CD4-positive, alpha-beta T cell (primary cell): ENCODE measurements at regions of chr4 and their contacts with region 1.

Region 1: GRCh38 chr4:38062088-38062893 is 102.1 kb downstream of the PTTG2 start:
- DNase-seq: peak; percentile 32 to 82 (median 54)
- ATAC-seq: peak; percentile 73
- H3K4me3 ChIP-seq: peak overlapping the region; percentile 44
- H3K4me3 Mint-ChIP-seq: peak overlapping the region; percentile 91
- H3K27ac ChIP-seq: no peak overlapping the region
- H3K27ac Mint-ChIP-seq: no peak overlapping the region
- H3K4me1 ChIP-seq: peaks cover 7% of the 10 kb centered on the region
- H3K4me1 Mint-ChIP-seq: peaks cover 15% of the 10 kb centered on the region
- H3K27me3 ChIP-seq: no peaks in the 10 kb centered on the region
- H3K27me3 Mint-ChIP-seq: no peaks in the 10 kb centered on the region
- CTCF ChIP-seq: peak; percentile 95

Region 2: GRCh38 chr4:38013461-38014366 is 48.6 kb before region 1 on chr4:
- CTCF ChIA-PET with region 1: no interaction called
- POLR2A ChIA-PET with region 1: no interaction called
- intact Hi-C with region 1: no loop called
- DNase-seq: no peak
- ATAC-seq: no peak
- H3K4me3 ChIP-seq: no peak overlapping the region
- H3K4me3 Mint-ChIP-seq: no peak overlapping the region
- H3K27ac ChIP-seq: no peak overlapping the region
- H3K27ac Mint-ChIP-seq: no peak overlapping the region
- H3K4me1 ChIP-seq: no peaks in the 10 kb centered on the region
- H3K4me1 Mint-ChIP-seq: peaks cover under 1% of the 10 kb centered on the region
- H3K27me3 ChIP-seq: no peaks in the 10 kb centered on the region
- H3K27me3 Mint-ChIP-seq: no peaks in the 10 kb centered on the region
- CTCF ChIP-seq: no peak

Region 3: DNA sequence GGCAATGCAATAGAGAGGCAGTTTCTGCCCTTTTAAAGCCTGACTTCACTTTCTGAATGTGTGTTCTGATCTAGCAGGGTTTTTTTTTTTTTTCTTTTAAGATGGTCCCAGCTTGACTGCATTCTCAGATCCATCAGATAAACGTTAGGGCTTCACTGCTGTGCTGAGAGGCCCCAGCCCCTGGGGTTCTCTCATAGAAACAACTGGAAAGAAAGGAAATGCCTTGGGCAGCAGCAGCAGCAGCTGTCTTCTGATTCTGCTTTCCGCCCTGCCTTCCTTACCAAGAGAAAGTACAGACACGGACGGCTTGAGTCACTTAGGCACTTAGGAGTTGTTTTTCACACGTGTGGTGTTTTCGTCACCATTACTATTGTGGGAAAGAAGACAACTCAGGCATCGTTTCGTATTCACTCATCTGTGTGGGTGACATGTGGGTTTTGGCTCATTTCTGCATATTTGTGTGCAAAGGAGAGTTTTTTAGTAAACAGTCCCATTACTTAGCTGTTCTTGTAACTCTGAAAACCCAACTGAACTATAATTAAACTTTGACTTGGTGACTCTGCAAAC is 69.9 kb after region 1 on chr4:
- CTCF ChIA-PET with region 1: no interaction called
- POLR2A ChIA-PET with region 1: no interaction called
- intact Hi-C with region 1: loop called in 1 of 2 experiments (anchors 5 kb)
- DNase-seq: peak; percentile 35 to 90 (median 54)
- ATAC-seq: peak; percentile 75
- H3K4me3 ChIP-seq: peak overlapping the region; percentile 6
- H3K4me3 Mint-ChIP-seq: peak overlapping the region; percentile 85
- H3K27ac ChIP-seq: peak overlapping the region; percentile 37 to 59
- H3K27ac Mint-ChIP-seq: peak overlapping the region; percentile 91
- H3K4me1 ChIP-seq: peaks cover 54% of the 10 kb centered on the region
- H3K4me1 Mint-ChIP-seq: peaks cover 53% of the 10 kb centered on the region
- H3K27me3 ChIP-seq: no peaks in the 10 kb centered on the region
- H3K27me3 Mint-ChIP-seq: no peaks in the 10 kb centered on the region
- CTCF ChIP-seq: no peak

Region 4: GRCh38 chr4:38675146-38676121 is 613.1 kb after region 1 on chr4:
- CTCF ChIA-PET with region 1: no interaction called
- POLR2A ChIA-PET with region 1: no interaction called
- intact Hi-C with region 1: loop called in 1 of 2 experiments (anchors 2 kb)
- DNase-seq: peak; percentile 66 to 93 (median 80)
- ATAC-seq: peak; percentile 57
- H3K4me3 ChIP-seq: no peak overlapping the region
- H3K4me3 Mint-ChIP-seq: peak overlapping the region; percentile 85
- H3K27ac ChIP-seq: peak overlapping the region in 1 of 2 donors; percentile 51
- H3K27ac Mint-ChIP-seq: peak overlapping the region; percentile 81
- H3K4me1 ChIP-seq: peaks cover 72% of the 10 kb centered on the region
- H3K4me1 Mint-ChIP-seq: peaks cover 89% of the 10 kb centered on the region
- H3K27me3 ChIP-seq: no peaks in the 10 kb centered on the region
- H3K27me3 Mint-ChIP-seq: no peaks in the 10 kb centered on the region
- CTCF ChIP-seq: peak; percentile 96

Region 5: DNA sequence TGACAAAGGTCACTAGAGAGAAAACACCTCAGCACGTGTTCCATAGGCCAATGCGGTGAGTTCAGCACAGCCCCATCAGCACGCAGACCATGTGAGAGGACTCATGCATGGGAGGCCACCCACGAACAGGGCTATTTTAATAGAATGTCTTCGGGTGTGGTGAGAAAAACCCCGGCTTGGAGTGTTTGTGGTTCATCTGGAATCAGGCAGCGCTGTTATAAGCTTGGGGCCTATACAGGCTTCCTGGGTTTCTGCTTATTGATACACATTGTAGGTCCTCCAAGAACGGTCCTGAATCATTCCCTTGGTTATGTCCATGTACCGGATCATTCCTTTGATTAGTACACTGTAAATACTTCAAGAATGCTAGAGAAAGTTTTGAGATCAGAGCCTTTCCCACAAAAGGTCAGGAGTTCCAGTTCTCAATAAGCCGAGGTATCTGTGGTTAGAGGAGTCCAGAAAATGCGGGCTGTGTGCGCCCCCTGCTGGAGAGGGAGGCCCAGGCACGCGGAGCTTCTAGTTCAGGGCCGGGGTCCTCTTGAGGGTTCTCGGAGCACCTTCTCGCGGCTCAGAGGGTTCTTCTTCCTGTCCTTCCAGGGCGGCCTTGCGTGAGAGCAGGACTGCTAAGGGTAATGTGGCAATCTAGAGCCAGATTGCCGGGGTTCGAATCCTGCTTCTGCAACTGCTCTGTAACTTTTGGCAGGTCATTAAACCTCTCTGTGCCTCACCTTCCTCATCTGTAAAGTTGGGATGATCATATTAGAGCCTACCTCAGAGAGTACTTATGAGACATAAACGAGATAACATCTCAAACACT is 668.7 kb after region 1 on chr4:
- CTCF ChIA-PET with region 1: interaction called, 5 read pairs
- POLR2A ChIA-PET with region 1: no interaction called
- intact Hi-C with region 1: loop called (anchors 1 kb)
- DNase-seq: peak; percentile 67 to 92 (median 80)
- ATAC-seq: peak; percentile 79
- H3K4me3 ChIP-seq: no peak overlapping the region
- H3K4me3 Mint-ChIP-seq: no peak overlapping the region
- H3K27ac ChIP-seq: no peak overlapping the region
- H3K27ac Mint-ChIP-seq: no peak overlapping the region
- H3K4me1 ChIP-seq: peaks cover 18% of the 10 kb centered on the region
- H3K4me1 Mint-ChIP-seq: peaks cover 20% of the 10 kb centered on the region
- H3K27me3 ChIP-seq: no peaks in the 10 kb centered on the region
- H3K27me3 Mint-ChIP-seq: no peaks in the 10 kb centered on the region
- CTCF ChIP-seq: peak; percentile 99

Region 6: DNA sequence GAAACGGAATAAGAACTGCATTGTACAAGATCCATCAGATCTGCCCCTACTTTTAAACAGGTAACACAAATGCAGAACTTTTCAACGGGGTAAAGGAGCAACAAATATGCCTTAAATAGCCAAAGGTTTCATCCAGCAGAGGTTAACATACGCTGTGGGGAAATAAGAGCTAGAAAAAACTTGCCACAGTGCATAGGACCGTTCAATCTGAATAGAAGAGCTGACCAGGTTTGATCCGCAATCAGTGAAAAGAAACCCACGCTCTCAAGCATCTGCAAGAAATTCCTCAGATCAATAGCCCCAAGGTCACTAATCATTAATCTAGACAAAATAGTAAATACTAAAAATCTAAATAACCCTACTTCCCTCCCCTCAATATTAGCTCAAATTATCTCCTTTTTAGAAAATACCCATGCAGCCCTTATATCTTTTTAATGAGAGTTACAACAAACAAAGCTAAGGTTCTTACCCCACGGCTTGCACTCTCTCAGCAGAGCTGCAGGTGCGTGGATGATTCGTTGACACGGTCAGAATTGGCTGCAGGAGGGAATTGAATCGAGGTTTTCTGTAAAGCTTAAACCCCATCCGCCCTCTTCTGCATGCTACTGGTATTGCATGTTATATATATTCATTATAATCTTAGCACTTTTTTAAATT is 720.3 kb after region 1 on chr4 and contains the start of gene TLR10:
- CTCF ChIA-PET with region 1: interaction called, 4 read pairs
- POLR2A ChIA-PET with region 1: interaction called, 3 read pairs
- intact Hi-C with region 1: loop called (anchors 2 kb)
- DNase-seq: peak in 7 of 14 experiments; percentile 14 to 75 (median 60)
- ATAC-seq: peak; percentile 77
- H3K4me3 ChIP-seq: no peak within 1 kb of the TSS
- H3K4me3 Mint-ChIP-seq: no peak within 1 kb of the TSS
- H3K27ac ChIP-seq: no peak within 1 kb of the TSS
- H3K27ac Mint-ChIP-seq: no peak within 1 kb of the TSS
- H3K4me1 ChIP-seq: peaks cover 4% of the 10 kb centered on the region
- H3K4me1 Mint-ChIP-seq: peaks cover 6% of the 10 kb centered on the region
- H3K27me3 ChIP-seq: no peaks in the 10 kb centered on the region
- H3K27me3 Mint-ChIP-seq: no peaks in the 10 kb centered on the region
- CTCF ChIP-seq: peak; percentile 78
- total RNA-seq, gene TLR10: not detected

Region 7: GRCh38 chr4:38856524-38857337 is 794.4 kb after region 1 on chr4 and contains the start of gene TLR6:
- CTCF ChIA-PET with region 1: interaction called, 3 read pairs
- POLR2A ChIA-PET with region 1: no interaction called
- intact Hi-C with region 1: loop called (anchors 5 to 10 kb)
- DNase-seq: peak in 13 of 14 experiments; percentile 31 to 87 (median 60)
- ATAC-seq: peak; percentile 80
- H3K4me3 ChIP-seq: peak within 1 kb of the TSS; percentile 50
- H3K4me3 Mint-ChIP-seq: peak within 1 kb of the TSS; percentile 69
- H3K27ac ChIP-seq: peak within 1 kb of the TSS; percentile 40 to 44
- H3K27ac Mint-ChIP-seq: peak within 1 kb of the TSS; percentile 78
- H3K4me1 ChIP-seq: peaks cover 18% of the 10 kb centered on the region
- H3K4me1 Mint-ChIP-seq: peaks cover 38% of the 10 kb centered on the region
- H3K27me3 ChIP-seq: no peaks in the 10 kb centered on the region
- H3K27me3 Mint-ChIP-seq: no peaks in the 10 kb centered on the region
- CTCF ChIP-seq: peak; percentile 92
- total RNA-seq, gene TLR6: 0.69 to 1.3 TPM